ENCODE measurements at regions of chr11 and their contacts with region 1.

Region 1: DNA sequence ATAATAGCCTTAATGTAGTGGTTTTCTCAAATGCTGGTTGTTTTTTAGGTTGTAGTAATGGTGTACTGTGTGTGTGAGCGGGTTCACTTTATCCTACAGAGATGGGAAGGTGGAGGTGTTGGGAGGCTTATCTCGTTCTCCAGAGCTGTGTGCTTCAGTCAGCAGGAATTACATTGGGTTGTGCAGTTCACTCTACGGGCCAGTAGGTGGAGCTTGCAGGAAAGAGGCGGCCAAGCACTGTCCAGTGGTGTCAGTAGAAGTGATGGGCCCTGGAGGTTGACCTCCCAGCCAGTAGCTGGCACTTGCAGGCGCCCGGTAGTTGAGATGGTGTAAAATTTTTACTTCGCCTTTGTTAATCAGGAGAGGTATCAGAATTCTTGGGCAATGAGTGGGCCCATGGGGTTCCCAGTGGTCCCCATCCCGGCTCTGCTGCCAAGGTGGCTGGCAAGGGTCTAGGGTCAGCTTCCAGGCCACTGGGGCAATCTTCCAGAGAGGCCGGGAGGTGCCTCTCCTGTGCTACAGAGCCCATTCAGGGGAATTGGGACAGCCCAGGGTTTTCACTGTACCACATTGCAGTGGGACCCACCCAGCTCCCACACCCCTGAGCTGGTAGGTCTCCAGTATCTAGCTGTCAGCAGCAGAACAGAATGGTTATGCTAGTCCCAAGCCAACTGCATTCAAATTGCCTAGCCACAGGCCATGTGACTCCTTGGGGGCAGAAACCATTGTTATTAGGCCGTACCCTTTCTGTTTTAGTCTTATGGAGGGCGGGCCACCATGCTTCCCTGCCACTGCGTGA is 43.9 kb downstream of the BIRC2 start:
- DNase-seq: peak; percentile 37
- ATAC-seq: peak; percentile 95
- H3K4me3 Mint-ChIP-seq: no peak overlapping the region
- H3K27ac Mint-ChIP-seq: no peak overlapping the region
- H3K4me1 Mint-ChIP-seq: peaks cover 13% of the 10 kb centered on the region
- H3K27me3 Mint-ChIP-seq: no peaks in the 10 kb centered on the region
- CTCF ChIP-seq: peak; percentile 85

Region 2: DNA sequence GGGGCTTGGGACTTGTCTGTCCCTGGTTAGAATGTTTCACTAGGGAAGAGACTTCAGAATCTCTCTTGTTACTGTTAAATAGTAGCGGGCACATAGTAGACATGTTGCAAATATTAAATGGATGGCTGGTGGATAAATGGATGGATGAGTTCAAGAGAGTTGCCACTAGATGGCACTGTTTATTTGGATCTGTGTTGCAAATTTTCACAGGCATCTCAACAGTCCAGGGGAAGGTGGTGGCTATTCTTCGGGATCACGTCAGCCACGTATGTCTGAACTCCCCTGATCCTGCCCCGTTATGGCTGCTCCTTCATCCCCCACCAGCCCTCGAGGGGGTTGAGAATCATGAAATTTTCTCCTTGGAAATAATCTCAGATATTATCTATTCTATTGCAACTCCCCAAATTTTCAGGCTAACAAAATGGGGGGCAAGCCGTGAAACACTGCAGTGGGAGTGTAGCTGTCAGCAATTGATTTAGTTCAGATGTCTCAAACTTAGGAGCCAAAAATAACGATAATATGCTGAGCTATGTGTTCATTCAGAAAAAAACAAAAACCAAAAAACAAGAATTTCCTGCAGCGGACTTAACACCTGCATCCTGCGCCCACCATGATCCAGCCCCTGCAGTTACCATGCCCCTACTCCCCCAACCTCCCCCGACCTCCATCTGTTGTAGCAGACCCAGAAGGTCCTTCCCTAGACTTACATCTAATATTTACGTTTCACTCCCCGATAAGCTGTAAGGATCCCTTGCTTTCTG is 102.7 kb before region 1 on chr11:
- CTCF ChIA-PET with region 1: interaction called, 12 read pairs
- POLR2A ChIA-PET with region 1: no interaction called
- intact Hi-C with region 1: loop called (anchors 5 kb)
- DNase-seq: no peak
- ATAC-seq: peak; percentile 84
- H3K4me3 Mint-ChIP-seq: peak overlapping the region; percentile 74
- H3K27ac Mint-ChIP-seq: peak overlapping the region; percentile 57
- H3K4me1 Mint-ChIP-seq: peaks cover 37% of the 10 kb centered on the region
- H3K27me3 Mint-ChIP-seq: no peaks in the 10 kb centered on the region
- CTCF ChIP-seq: no peak

Region 3: GRCh38 chr11:102341844-102342318 is 49.0 kb before region 1 on chr11:
- CTCF ChIA-PET with region 1: interaction called, 13 read pairs
- POLR2A ChIA-PET with region 1: no interaction called
- intact Hi-C with region 1: no loop called
- DNase-seq: no peak
- ATAC-seq: peak; percentile 37
- H3K4me3 Mint-ChIP-seq: no peak overlapping the region
- H3K27ac Mint-ChIP-seq: peak overlapping the region; percentile 42
- H3K4me1 Mint-ChIP-seq: peaks cover 29% of the 10 kb centered on the region
- H3K27me3 Mint-ChIP-seq: no peaks in the 10 kb centered on the region
- CTCF ChIP-seq: peak; percentile 50

Region 4: DNA sequence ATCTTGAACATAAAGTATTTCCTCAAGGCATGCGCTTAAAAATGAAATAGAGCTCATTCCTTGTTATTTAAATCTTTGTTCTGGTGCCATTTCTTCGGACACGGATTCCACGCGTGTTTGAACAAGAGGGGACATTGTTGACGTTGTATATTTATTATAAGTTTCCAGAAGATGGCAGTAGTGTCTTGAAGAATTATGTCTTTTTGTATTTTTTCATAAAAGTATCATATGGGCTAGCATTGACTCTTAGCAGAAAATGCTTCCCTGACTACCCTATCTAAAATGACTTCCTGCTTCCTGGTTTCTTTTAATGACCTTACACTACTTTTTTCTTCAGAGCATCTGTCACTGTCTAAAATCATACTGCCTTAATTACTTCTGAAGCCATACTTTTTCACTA is 23.5 kb before region 1 on chr11:
- CTCF ChIA-PET with region 1: interaction called, 6 read pairs
- POLR2A ChIA-PET with region 1: no interaction called
- intact Hi-C with region 1: loop called (anchors 1 kb)
- DNase-seq: no peak
- ATAC-seq: no peak
- H3K4me3 Mint-ChIP-seq: no peak overlapping the region
- H3K27ac Mint-ChIP-seq: peak overlapping the region; percentile 21
- H3K4me1 Mint-ChIP-seq: peaks cover 14% of the 10 kb centered on the region
- H3K27me3 Mint-ChIP-seq: no peaks in the 10 kb centered on the region
- CTCF ChIP-seq: no peak

Region 5: DNA sequence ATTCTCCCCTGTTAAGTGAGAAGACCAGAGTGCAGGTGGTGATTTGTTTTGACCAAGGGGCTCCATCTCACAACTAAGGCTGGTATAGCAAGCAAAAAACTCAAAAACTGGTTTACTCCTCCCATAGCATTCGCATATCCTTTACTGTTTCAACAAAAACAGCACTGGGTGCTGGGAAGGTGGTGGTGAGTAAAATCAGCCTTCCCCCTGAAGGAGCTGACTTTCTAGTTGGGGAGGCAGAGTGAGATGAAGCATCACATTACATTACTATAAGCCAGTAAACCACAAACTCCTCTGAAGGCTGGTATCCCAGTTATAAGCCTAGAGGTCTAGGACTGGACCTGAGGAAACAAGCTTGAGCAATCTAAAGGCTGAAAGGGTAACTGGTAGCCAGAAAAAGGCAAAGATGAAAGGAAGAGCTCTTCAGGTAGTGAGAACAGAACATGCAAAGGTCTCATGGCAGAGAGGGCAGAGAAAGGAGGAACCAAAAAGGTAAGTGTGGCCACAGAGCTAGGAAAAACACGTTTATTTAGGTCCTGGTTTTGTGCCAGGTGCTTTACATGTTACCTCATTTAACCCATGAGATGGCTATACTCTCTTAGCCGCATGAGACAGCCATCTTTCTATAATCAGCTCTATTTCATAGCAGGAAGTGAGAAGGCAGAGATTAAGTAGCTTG is 39.4 kb after region 1 on chr11:
- CTCF ChIA-PET with region 1: interaction called, 8 read pairs
- POLR2A ChIA-PET with region 1: no interaction called
- intact Hi-C with region 1: loop called (anchors 1 kb)
- DNase-seq: no peak
- ATAC-seq: peak; percentile 84
- H3K4me3 Mint-ChIP-seq: peak overlapping the region; percentile 39
- H3K27ac Mint-ChIP-seq: peak overlapping the region; percentile 72
- H3K4me1 Mint-ChIP-seq: peaks cover 56% of the 10 kb centered on the region
- H3K27me3 Mint-ChIP-seq: no peaks in the 10 kb centered on the region
- CTCF ChIP-seq: no peak

Region 6: DNA sequence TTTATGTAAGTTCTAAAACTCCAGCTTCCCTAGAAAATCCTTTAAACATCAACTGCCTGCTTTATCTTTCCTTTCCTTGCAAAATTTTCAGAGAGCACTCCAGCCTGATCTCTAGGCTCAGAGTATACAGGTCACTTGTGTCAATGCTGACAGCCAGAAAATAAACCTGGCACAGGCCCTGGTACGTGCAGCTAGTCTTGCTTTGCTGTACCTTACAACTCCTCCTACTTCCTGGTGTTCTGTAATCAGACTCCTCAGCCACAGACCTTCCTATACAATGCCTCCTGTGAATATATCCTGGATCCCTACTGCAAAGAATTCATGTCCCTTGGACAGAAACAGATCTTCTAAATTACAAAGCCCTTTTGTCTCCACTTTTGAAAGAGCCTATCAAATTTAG is 85.9 kb after region 1 on chr11:
- CTCF ChIA-PET with region 1: interaction called, 11 read pairs
- POLR2A ChIA-PET with region 1: no interaction called
- intact Hi-C with region 1: no loop called
- DNase-seq: no peak
- ATAC-seq: no peak
- H3K4me3 Mint-ChIP-seq: peak overlapping the region; percentile 17
- H3K27ac Mint-ChIP-seq: peak overlapping the region; percentile 65
- H3K4me1 Mint-ChIP-seq: peaks cover 47% of the 10 kb centered on the region
- H3K27me3 Mint-ChIP-seq: no peaks in the 10 kb centered on the region
- CTCF ChIP-seq: no peak

Measured in activated B cell treated with CpG ODN at 0.5 μM for 24 hours (primary cell).